ENCODE measurements at regions of chr16 and their contacts with region 1.

Region 1: GRCh38 chr16:67883872-67884261 is 818 bp upstream of the NRN1L start:
- DNase-seq: peak; percentile 54 to 89 (median 83)
- ATAC-seq: peak; percentile 58
- H3K4me3 ChIP-seq: no peak overlapping the region
- H3K27ac ChIP-seq: peak overlapping the region; percentile 65
- H3K4me1 ChIP-seq: peaks cover 3% of the 10 kb centered on the region
- H3K27me3 ChIP-seq: no peaks in the 10 kb centered on the region

Region 2: GRCh38 chr16:67667817-67668494 is 215.9 kb before region 1 on chr16:
- intact Hi-C with region 1: no loop called
- DNase-seq: peak; percentile 88 to 95 (median 94)
- ATAC-seq: peak; percentile 83 to 86
- H3K4me3 ChIP-seq: no peak overlapping the region
- H3K27ac ChIP-seq: peak overlapping the region; percentile 75
- H3K4me1 ChIP-seq: peaks cover 5% of the 10 kb centered on the region
- H3K27me3 ChIP-seq: no peaks in the 10 kb centered on the region

Region 3: GRCh38 chr16:67928561-67929364 is 44.9 kb after region 1 on chr16:
- intact Hi-C with region 1: loop called in 3 of 4 experiments (anchors 2 to 5 kb)
- DNase-seq: peak; percentile 69 to 88 (median 88)
- ATAC-seq: peak; percentile 59 to 62
- H3K4me3 ChIP-seq: no peak overlapping the region
- H3K27ac ChIP-seq: no peak overlapping the region
- H3K4me1 ChIP-seq: peaks cover 3% of the 10 kb centered on the region
- H3K27me3 ChIP-seq: no peaks in the 10 kb centered on the region

Region 4: DNA sequence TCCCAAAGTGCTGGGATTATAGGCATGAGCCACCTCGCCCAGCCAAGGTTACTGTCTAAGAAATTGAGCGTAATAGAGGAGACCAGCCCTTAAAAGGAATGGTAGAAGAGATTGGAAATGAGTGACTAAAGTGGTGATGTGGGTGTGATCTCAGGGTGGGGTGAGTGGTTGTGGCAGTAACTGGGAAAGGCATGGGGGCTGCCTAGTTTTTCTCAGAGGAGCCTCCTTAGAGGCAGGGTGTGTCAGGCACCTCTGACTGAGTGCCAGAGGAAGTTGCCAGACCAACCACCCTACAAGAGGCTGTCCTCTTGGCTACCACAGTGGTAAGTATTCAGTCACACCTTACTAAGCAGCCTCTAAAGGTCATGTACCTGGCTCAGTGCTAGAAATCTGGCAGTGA is 148.1 kb after region 1 on chr16:
- intact Hi-C with region 1: loop called in 1 of 4 experiments (anchors 10 kb)
- DNase-seq: no peak
- ATAC-seq: peak; percentile 26 to 53
- H3K4me3 ChIP-seq: no peak overlapping the region
- H3K27ac ChIP-seq: no peak overlapping the region
- H3K4me1 ChIP-seq: no peaks in the 10 kb centered on the region
- H3K27me3 ChIP-seq: no peaks in the 10 kb centered on the region